Heart left ventricle (tissue), 16 donors: ENCODE measurements at regions of chrX and their contacts with region 1.

Region 1: DNA sequence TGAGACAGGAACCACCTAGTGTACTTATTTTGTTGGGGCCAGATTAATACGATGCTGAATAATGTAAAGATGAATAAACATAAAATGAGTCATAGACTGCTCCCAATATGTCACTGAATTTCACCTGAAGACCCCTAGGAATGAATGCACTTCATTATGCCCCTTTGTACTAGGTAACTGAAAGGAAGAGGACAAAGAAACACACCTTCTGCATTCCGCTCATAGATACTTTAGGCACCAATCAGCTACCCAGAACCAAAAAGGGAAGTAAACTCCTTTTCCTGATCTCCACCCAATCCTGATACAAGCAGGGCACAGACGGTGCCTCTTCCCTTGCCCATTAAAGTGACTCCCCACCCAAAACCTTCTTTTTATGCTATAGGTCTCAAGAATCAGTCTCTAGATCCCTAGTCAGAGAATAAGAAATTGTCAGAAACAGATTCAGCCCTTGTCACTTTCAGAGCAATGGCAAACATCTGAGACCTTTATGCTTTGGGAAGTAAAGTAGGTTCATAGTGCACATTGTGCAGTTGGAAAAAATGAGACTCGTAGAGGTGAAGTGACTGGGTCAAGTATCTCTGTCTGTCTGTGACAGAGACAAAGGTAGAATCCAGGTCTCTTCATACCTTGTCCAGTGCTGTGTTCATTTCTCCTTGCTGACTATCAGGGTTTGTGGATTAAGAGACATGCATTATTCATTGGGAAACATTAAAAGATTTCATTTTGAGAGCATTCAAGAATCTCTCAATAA is 2.3 kb downstream of the GPR174 start:
- DNase-seq: no peak
- ATAC-seq: no peak
- H3K4me3 ChIP-seq: peak overlapping the region in 4 of 12 donors; percentile 25 to 45 (median 31)
- H3K27ac ChIP-seq: peak overlapping the region in 6 of 12 donors; percentile 13 to 67 (median 24)
- H3K4me1 ChIP-seq: no peaks in the 10 kb centered on the region
- H3K27me3 ChIP-seq: peaks cover 0 to 2% (median 0%) of the 10 kb centered on the region in 9 donors
- CTCF ChIP-seq: no peak
- POLR2A ChIP-seq: no peak

Region 2: DNA sequence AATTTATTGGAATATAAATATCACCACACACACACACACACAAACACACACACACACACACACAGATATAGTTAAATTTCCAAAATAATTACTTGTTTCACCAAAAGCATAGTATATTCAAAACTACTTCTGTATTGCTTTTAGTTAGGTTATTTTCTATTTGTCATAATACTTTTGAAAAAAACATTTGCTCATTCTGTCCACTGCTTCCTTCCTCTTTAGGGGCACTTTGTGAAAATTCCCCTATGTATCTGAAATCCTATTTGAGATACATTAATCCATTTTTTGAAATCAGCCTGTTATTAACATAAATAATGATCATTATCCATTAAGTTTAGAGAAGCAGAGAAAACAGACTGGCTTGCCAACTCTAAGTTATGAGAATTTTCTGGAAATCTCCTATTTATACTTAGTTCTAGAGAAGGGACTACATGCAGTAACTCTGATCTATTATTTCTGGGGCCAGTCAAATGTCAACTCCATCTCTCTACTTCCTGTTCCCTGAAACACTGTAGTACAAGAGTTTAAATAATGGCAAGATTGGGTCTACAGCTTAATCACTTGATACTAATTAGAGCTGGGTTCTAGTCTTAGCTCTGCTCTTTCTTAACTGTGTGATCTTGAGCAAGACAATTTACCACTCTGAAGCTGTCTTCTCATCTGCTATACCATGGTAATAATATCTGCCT is 56.8 kb before region 1 on chrX:
- intact Hi-C with region 1: loop called in 1 of 10 experiments (anchors 5 kb)
- DNase-seq: no peak
- ATAC-seq: no peak
- H3K4me3 ChIP-seq: no peak overlapping the region
- H3K27ac ChIP-seq: peak overlapping the region in 1 of 12 donors; percentile 35
- H3K4me1 ChIP-seq: peaks cover 0 to 7% (median 0%) of the 10 kb centered on the region in 12 donors
- H3K27me3 ChIP-seq: peaks cover 0 to under 1% (median 0%) of the 10 kb centered on the region in 9 donors
- CTCF ChIP-seq: no peak
- POLR2A ChIP-seq: no peak

Region 3: GRCh38 chrX:79336869-79337815 is 190.3 kb after region 1 on chrX:
- intact Hi-C with region 1: no loop called
- DNase-seq: no peak
- ATAC-seq: no peak
- H3K4me3 ChIP-seq: peak overlapping the region in 7 of 12 donors; percentile 12 to 43 (median 31)
- H3K27ac ChIP-seq: peak overlapping the region in 4 of 12 donors; percentile 20 to 42 (median 38)
- H3K4me1 ChIP-seq: no peaks in the 10 kb centered on the region
- H3K27me3 ChIP-seq: no peaks in the 10 kb centered on the region
- CTCF ChIP-seq: no peak
- POLR2A ChIP-seq: no peak